ENCODE measurements at regions of chr17 and their contacts with region 1.

Region 1: GRCh38 chr17:74736513-74737298 is at the start of gene RAB37:
- DNase-seq: no peak
- H3K4me3 ChIP-seq: no peak within 1 kb of the TSS
- H3K27ac ChIP-seq: no peak within 1 kb of the TSS
- H3K4me1 ChIP-seq: peaks cover 14% of the 10 kb centered on the region
- H3K27me3 ChIP-seq: peaks cover 28% of the 10 kb centered on the region
- CTCF ChIP-seq: no peak
- total RNA-seq, gene RAB37: not detected in 2 replicates

Region 2: GRCh38 chr17:74659898-74660297 is 76.8 kb before region 1 on chr17:
- CTCF ChIA-PET with region 1: interaction called, 5 read pairs
- POLR2A ChIA-PET with region 1: no interaction called
- intact Hi-C with region 1: loop called (anchors 1 kb)
- DNase-seq: no peak
- H3K4me3 ChIP-seq: no peak overlapping the region
- H3K27ac ChIP-seq: no peak overlapping the region
- H3K4me1 ChIP-seq: no peaks in the 10 kb centered on the region
- H3K27me3 ChIP-seq: peaks cover 84% of the 10 kb centered on the region
- CTCF ChIP-seq: no peak

Region 3: GRCh38 chr17:74763565-74764387 is 27.1 kb after region 1 on chr17:
- CTCF ChIA-PET with region 1: no interaction called
- POLR2A ChIA-PET with region 1: no interaction called
- intact Hi-C with region 1: no loop called
- DNase-seq: no peak
- H3K4me3 ChIP-seq: no peak overlapping the region
- H3K27ac ChIP-seq: no peak overlapping the region
- H3K4me1 ChIP-seq: peaks cover 26% of the 10 kb centered on the region
- H3K27me3 ChIP-seq: no peaks in the 10 kb centered on the region
- CTCF ChIP-seq: no peak